ENCODE measurements at regions of chr14 and their contacts with region 1.

Region 1: DNA sequence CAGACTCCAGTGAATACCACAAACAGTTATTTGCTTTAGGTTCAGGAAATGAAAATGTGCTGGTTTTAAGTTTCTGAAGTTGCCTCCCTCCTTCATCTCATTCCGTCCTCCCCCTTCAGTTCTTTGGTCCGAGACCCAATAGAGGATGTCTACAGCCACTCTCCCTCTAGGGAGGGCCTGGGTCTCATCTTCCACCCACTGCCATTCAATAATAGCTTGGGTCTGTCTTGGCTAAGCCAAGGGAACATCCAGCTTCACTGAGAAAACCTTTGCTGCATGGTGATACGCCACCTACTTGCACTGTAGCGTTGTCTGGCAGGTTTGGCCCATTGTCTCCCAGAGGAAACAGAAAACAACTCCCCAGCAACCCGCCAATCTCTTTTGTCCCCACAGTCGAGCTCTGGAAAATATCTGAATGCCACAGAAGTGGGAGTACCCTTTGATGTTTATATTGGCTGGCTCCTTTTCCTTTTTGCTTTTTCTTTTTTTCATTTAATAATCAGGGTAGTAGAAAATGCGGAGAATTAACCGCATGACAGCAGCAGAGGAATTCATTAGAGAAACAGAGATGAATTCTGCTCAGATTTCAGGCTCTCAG is 380.1 kb downstream of the RAD51B start:
- DNase-seq: no peak
- ATAC-seq: no peak
- H3K4me3 ChIP-seq: no peak overlapping the region
- H3K27ac ChIP-seq: no peak overlapping the region
- H3K4me1 ChIP-seq: no peaks in the 10 kb centered on the region
- H3K27me3 ChIP-seq: no peaks in the 10 kb centered on the region
- CTCF ChIP-seq: no peak
- POLR2A ChIP-seq: no peak
- RAD21 ChIP-seq: no peak

Region 2: DNA sequence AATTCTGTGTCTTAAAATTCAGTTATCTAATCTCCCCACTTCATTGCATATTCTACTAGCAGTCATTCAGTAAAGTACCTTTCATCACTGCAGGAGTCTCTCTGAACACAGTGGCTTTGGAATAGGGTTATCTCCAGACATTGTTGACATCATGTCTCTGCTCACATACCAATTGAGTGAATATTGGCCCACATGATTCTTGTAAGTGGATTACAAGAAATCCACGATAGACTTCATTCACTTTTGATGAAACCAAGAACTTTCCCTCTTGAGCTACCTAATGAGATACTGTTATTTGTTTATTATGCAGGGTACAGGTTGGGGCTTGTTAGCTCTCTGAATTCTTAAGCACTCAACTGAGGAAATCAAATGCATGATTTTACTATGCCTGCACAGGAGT is 95.1 kb before region 1 on chr14:
- CTCF ChIA-PET with region 1: no interaction called
- POLR2A ChIA-PET with region 1: no interaction called
- dilution Hi-C with region 1: no loop called
- in situ Hi-C with region 1: no loop called
- intact Hi-C with region 1: loop called (anchors 10 kb)
- DNase-seq: peak; percentile 91
- ATAC-seq: peak; percentile 94
- H3K4me3 ChIP-seq: no peak overlapping the region
- H3K27ac ChIP-seq: peak overlapping the region; percentile 44; the same call in 1 of the 2 replicates
- H3K4me1 ChIP-seq: peaks cover 4% of the 10 kb centered on the region; the same call in 1 of the 2 replicates
- H3K27me3 ChIP-seq: no peaks in the 10 kb centered on the region
- CTCF ChIP-seq: no peak
- POLR2A ChIP-seq: no peak
- RAD21 ChIP-seq: no peak